ENCODE measurements at regions of chr7 and their contacts with region 1.

Region 1: DNA sequence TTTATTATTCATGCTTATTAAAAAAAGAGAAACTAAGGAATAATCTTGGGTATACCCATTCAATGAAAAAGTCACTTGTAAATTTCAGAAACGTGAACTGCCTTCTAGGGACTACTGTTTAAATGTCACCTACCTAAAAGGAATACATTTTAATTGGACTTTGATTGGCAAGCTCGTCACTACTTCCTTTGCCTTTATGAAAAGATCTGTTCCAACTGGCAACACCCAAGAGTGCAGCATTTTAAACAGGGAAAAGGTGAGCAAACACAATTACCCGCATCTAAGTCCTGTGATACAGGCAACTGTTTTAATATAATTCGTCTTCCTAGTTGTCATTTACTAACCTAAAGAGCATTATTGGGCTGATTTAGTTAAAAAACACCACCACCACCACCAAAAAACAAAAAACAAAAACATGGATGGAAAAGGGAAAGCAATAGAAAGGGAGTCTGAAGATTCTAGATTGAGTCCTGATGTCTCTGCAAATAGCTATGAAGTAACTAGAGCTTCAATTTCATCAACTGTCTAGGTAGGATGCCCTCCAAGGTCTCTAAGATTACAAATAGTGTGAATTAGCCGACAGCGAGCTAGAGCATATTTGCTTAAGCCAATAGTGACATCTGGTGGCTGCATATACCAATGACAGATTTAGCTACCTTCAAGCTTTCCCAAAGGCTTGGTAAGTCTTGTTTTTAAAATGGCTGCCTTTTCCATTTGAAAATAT is 33.8 kb upstream of the ICA1 start:
- DNase-seq: peak; percentile 71
- H3K4me3 ChIP-seq: peak overlapping the region in 1 of 2 experiments; percentile 17; a peak in 1 of 4 replicates
- H3K27ac ChIP-seq: peak overlapping the region in 1 of 2 experiments; percentile 100; a peak in 2 of 4 replicates
- H3K4me1 ChIP-seq: peaks cover 0 to 21% of the 10 kb centered on the region in 2 experiments; a peak in 2 of 4 replicates
- H3K27me3 ChIP-seq: no peaks in the 10 kb centered on the region
- CTCF ChIP-seq: peak; percentile 93
- EP300 ChIP-seq: peak in 1 of 2 experiments; percentile 60; a peak in 2 of 4 replicates
- RAD21 ChIP-seq: peak; percentile 100

Region 2: DNA sequence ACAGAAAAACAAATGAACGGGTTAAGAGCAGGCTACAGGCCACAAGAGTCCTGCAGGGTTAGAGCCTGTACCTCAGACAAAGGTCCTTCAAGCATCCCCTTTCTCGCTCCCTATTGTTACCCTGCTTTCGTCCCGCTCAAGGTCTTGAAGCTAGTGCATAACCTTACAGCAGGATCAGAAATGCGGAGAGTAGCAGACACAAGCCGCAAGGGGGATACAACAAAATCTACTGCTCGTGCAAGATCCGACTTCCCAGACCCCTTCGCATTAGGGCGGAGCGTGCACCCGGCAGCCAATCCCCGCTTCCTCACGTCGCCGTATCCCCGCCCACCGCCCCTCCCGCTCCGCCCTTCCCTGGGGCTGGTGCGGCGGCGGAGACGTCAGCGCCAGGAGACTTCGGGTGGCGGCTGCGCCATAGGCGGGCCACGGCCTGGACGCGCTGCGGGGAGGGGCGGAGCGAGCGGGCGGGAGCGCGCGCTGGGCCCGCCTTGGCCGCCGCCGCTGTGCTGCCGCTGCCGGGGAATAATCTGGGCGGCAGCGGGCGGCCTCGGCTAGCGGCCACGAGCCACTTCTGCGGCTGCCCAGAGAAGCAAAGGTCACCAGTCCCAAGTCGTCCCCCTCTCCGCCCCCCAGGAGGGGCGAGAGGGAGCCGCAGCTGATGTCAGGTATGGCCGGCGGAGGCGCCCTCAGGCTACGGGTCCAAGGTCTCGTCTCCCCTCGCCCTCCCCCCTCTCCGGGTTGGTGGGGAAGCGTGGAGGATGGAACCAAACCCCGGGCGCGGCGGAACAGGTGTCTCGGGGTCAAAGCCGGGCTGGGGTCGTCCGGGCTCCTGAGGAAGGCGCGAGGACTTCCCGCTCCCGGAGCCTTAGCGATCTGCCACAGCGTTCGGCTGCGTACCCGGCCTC is 1113.4 kb before region 1 on chr7 and contains the start of gene C1GALT1:
- CTCF ChIA-PET with region 1: interaction called, 14 read pairs
- POLR2A ChIA-PET with region 1: no interaction called
- DNase-seq: peak; percentile 98
- H3K4me3 ChIP-seq: peak within 1 kb of the TSS; percentile 78 to 100
- H3K27ac ChIP-seq: peak within 1 kb of the TSS; percentile 85 to 99
- H3K4me1 ChIP-seq: peaks cover 13 to 19% of the 10 kb centered on the region in 2 experiments; a peak in 3 of 4 replicates
- H3K27me3 ChIP-seq: no peaks in the 10 kb centered on the region
- CTCF ChIP-seq: peak; percentile 54
- EP300 ChIP-seq: 0 out of 4 replicates have a peak, but pooled peaks of 1 of the 2 experiments have one; percentile 11
- RAD21 ChIP-seq: peak; percentile 52
- polyA plus RNA-seq, gene C1GALT1: 15.2 and 16.4 TPM in 2 replicates

Region 3: DNA sequence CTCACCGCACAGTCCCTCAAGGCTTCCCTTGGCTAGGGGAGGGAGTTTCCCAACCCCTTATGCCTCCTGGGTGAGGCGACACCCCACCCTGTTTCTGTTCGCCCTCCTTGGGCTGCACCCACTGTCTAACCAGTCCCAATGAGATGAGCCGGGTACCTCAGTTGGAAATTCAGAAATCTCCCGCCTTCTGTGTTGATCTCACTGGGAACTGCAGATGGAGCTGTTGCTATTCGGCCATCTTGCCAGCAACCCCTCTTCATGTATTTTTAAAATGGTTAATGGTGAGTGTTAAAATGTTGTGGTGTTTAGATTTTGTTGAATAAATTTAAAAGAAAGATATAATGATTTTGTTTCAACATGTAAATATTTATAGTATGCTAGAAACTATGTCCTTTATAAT is 633.3 kb before region 1 on chr7:
- CTCF ChIA-PET with region 1: interaction called, 12 read pairs
- POLR2A ChIA-PET with region 1: no interaction called
- DNase-seq: no peak
- H3K4me3 ChIP-seq: no peak overlapping the region; a peak in 1 of 4 replicates
- H3K27ac ChIP-seq: peak overlapping the region in 1 of 2 experiments; percentile 31; a peak in 1 of 4 replicates
- H3K4me1 ChIP-seq: peaks cover 0 to 3% of the 10 kb centered on the region in 2 experiments; a peak in 2 of 4 replicates
- H3K27me3 ChIP-seq: no peaks in the 10 kb centered on the region
- CTCF ChIP-seq: peak; percentile 58
- EP300 ChIP-seq: no peak
- RAD21 ChIP-seq: peak; percentile 72

Region 4: GRCh38 chr7:7943951-7944350 is 351.8 kb before region 1 on chr7:
- CTCF ChIA-PET with region 1: no interaction called
- POLR2A ChIA-PET with region 1: no interaction called
- DNase-seq: no peak
- H3K4me3 ChIP-seq: no peak overlapping the region
- H3K27ac ChIP-seq: no peak overlapping the region
- H3K4me1 ChIP-seq: peaks cover 0 to 16% of the 10 kb centered on the region in 2 experiments; a peak in 2 of 4 replicates
- H3K27me3 ChIP-seq: no peaks in the 10 kb centered on the region
- CTCF ChIP-seq: no peak
- EP300 ChIP-seq: no peak
- RAD21 ChIP-seq: no peak

Region 5: GRCh38 chr7:8190119-8190895 is 105.5 kb before region 1 on chr7:
- CTCF ChIA-PET with region 1: interaction called, 11 read pairs
- POLR2A ChIA-PET with region 1: no interaction called
- DNase-seq: peak; percentile 60
- H3K4me3 ChIP-seq: no peak overlapping the region
- H3K27ac ChIP-seq: peak overlapping the region in 1 of 2 experiments; percentile 60; a peak in 2 of 4 replicates
- H3K4me1 ChIP-seq: peaks cover 0 to 31% of the 10 kb centered on the region in 2 experiments; a peak in 2 of 4 replicates
- H3K27me3 ChIP-seq: no peaks in the 10 kb centered on the region
- CTCF ChIP-seq: peak; percentile 89
- EP300 ChIP-seq: 0 out of 4 replicates have a peak, but pooled peaks of 1 of the 2 experiments have one; percentile 10
- RAD21 ChIP-seq: peak; percentile 82

Region 6: DNA sequence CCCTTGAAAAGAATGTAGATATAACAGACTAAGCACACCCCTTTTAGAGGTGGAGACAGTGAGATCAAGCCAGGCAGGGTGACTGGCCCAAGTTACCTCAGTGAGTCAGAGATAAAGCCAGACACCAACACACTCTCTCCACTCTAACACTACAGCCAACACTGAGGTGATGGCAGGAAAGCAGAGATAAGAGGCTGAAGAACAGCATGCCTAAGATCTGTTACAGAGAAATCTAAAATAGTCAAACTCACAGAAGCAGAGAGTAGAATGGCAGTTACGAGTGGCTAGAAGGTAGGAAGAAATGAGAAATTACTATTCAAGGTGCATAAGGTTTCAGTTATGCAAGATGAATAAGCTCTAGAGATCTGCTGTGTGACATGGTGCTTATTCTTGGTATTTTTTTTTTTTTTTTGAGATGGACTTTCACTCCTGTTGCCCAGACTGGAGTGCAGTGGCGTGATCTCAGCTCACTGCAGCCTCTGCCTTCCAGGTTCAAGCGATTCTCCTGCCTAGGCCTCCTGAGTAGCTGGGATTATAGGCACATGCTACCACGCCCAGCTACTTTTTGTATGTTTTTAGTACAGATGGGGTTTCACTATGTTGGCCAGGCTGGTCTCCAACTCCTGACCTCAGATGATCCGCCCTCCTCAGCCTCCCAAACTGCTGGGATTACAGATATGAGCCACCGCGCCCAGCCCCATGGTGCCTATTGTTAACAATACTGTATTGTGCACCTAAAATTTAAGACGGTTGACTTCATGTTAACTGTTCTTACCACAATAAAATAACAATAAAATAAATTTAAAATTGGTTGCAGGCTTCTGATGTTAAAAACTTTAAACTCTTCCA is 62.6 kb before region 1 on chr7:
- CTCF ChIA-PET with region 1: interaction called, 83 read pairs
- POLR2A ChIA-PET with region 1: interaction called, 74 read pairs
- DNase-seq: no peak
- H3K4me3 ChIP-seq: no peak overlapping the region
- H3K27ac ChIP-seq: peak overlapping the region in 1 of 2 experiments; percentile 100; a peak in 2 of 4 replicates
- H3K4me1 ChIP-seq: peaks cover 0 to 60% of the 10 kb centered on the region in 2 experiments; a peak in 2 of 4 replicates
- H3K27me3 ChIP-seq: no peaks in the 10 kb centered on the region
- CTCF ChIP-seq: no peak
- EP300 ChIP-seq: peak in 1 of 2 experiments; percentile 52; a peak in 1 of 4 replicates
- RAD21 ChIP-seq: no peak

Region 7: GRCh38 chr7:8277394-8277982 is 18.3 kb before region 1 on chr7:
- CTCF ChIA-PET with region 1: interaction called, 13 read pairs
- POLR2A ChIA-PET with region 1: no interaction called
- DNase-seq: no peak
- H3K4me3 ChIP-seq: no peak overlapping the region
- H3K27ac ChIP-seq: no peak overlapping the region
- H3K4me1 ChIP-seq: no peaks in the 10 kb centered on the region; a peak in 1 of 4 replicates
- H3K27me3 ChIP-seq: no peaks in the 10 kb centered on the region
- CTCF ChIP-seq: peak; percentile 27; the same call in 1 of the 2 replicates
- EP300 ChIP-seq: no peak
- RAD21 ChIP-seq: peak; percentile 56

Region 8: DNA sequence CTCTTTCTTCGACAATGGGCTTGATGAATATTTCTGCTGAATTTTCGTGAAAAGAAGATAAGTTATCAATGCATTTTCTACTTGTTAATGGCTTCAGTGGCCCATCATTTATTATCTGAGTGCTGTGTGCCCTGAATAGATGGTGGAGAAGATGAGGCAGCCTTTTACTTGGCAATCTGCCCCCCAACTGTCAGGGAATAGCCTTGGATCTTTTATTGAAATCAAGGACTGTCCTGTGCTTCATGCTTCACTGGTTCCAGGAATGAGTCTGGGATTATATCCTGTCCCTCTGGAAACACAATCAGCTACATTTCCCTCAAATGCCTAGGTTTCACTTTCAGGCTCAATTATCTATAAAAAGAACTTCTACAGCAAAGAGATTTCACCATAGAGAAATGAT is 61.7 kb after region 1 on chr7:
- CTCF ChIA-PET with region 1: interaction called, 23 read pairs
- POLR2A ChIA-PET with region 1: no interaction called
- DNase-seq: peak; percentile 68
- H3K4me3 ChIP-seq: peak overlapping the region; percentile 3 to 25; a peak in 1 of 4 replicates
- H3K27ac ChIP-seq: peak overlapping the region in 1 of 2 experiments; percentile 96; a peak in 2 of 4 replicates
- H3K4me1 ChIP-seq: peaks cover 0 to 14% of the 10 kb centered on the region in 2 experiments; a peak in 2 of 4 replicates
- H3K27me3 ChIP-seq: no peaks in the 10 kb centered on the region
- CTCF ChIP-seq: no peak
- EP300 ChIP-seq: peak; percentile 13 to 98; a peak in 2 of 4 replicates
- RAD21 ChIP-seq: peak; percentile 31; the same call in 1 of the 2 replicates

Region 9: GRCh38 chr7:8481752-8482446 is 186.1 kb after region 1 on chr7:
- CTCF ChIA-PET with region 1: no interaction called
- POLR2A ChIA-PET with region 1: no interaction called
- DNase-seq: no peak
- H3K4me3 ChIP-seq: no peak overlapping the region
- H3K27ac ChIP-seq: no peak overlapping the region
- H3K4me1 ChIP-seq: no peaks in the 10 kb centered on the region
- H3K27me3 ChIP-seq: no peaks in the 10 kb centered on the region
- CTCF ChIP-seq: no peak
- EP300 ChIP-seq: no peak
- RAD21 ChIP-seq: no peak

Measured in SK-N-SH (cell line).